Activated CD4-positive, alpha-beta T cell treated with anti-CD3 and anti-CD28 coated beads for 36 hours (primary cell): ENCODE measurements at regions of chr6 and their contacts with region 1.

Region 1: GRCh38 chr6:132341646-132342045 is 59.6 kb downstream of the MOXD1 start:
- DNase-seq: no peak
- ATAC-seq: no peak
- H3K4me3 Mint-ChIP-seq: no peak overlapping the region
- H3K27ac Mint-ChIP-seq: no peak overlapping the region
- H3K4me1 Mint-ChIP-seq: no peaks in the 10 kb centered on the region
- H3K27me3 Mint-ChIP-seq: no peaks in the 10 kb centered on the region

Region 2: GRCh38 chr6:132115714-132116366 is 225.8 kb before region 1 on chr6:
- CTCF ChIA-PET with region 1: no interaction called
- POLR2A ChIA-PET with region 1: no interaction called
- intact Hi-C with region 1: no loop called
- DNase-seq: no peak
- ATAC-seq: no peak
- H3K4me3 Mint-ChIP-seq: no peak overlapping the region
- H3K27ac Mint-ChIP-seq: no peak overlapping the region
- H3K4me1 Mint-ChIP-seq: no peaks in the 10 kb centered on the region
- H3K27me3 Mint-ChIP-seq: peaks cover 6% of the 10 kb centered on the region

Region 3: DNA sequence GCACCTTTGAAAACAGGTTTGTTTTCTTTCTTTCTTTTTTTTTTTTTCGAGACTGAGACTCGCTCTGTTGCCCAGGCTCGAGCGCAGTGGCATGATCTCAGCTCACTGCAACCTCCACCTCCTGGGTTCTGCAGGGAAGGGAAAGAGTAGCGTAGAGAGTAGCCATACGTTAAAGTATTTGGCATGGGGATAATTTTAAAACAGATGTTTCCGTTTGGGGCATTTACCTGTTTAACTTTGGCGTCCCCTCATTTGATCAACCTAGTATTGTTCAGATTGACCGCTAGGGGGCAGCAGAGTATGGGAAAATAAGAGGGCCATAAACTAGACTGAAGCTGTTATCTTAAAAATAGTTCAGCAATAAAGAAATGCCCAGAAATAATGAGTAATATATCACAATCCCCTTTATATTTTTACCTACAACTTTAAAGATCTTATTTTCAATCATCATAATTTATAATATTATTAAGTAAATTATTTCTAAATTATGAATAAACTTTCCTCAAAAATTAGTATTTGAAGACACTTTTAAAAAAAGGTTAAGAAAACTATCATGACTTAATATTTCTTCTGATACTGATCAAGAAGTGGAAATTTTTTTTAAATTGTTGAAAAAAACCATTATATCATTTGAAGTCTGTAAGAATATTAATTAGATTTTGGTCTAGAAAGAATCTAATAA is 188.8 kb after region 1 on chr6:
- CTCF ChIA-PET with region 1: no interaction called
- POLR2A ChIA-PET with region 1: no interaction called
- intact Hi-C with region 1: no loop called
- DNase-seq: peak; percentile 82
- ATAC-seq: peak; percentile 57
- H3K4me3 Mint-ChIP-seq: no peak overlapping the region
- H3K27ac Mint-ChIP-seq: no peak overlapping the region
- H3K4me1 Mint-ChIP-seq: no peaks in the 10 kb centered on the region
- H3K27me3 Mint-ChIP-seq: peaks cover 6% of the 10 kb centered on the region

Region 4: DNA sequence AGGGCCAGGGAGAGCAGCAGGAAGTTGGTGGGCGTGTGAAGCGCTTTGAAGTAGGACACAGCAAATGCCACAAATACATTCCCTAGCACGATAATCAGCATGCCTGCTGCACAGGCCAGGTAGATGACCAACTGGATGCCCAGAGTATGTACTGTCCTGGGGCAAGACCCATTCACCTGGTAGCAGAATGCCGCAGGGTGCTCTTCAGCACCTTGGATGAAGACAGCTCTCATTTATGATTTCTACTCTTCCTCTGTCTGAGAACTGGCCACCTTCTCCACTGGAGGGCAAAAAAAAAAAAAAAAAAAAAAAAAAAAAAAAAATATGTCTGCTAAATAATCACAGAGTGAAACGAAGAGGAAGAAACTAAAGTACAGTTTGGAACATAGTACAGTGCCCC is 247.8 kb after region 1 on chr6 and contains the start of gene TAAR5:
- CTCF ChIA-PET with region 1: no interaction called
- POLR2A ChIA-PET with region 1: interaction called, 10 read pairs
- intact Hi-C with region 1: no loop called
- DNase-seq: no peak
- ATAC-seq: no peak
- H3K4me3 Mint-ChIP-seq: no peak within 1 kb of the TSS
- H3K27ac Mint-ChIP-seq: no peak within 1 kb of the TSS
- H3K4me1 Mint-ChIP-seq: no peaks in the 10 kb centered on the region
- H3K27me3 Mint-ChIP-seq: peaks cover 19% of the 10 kb centered on the region
- total RNA-seq, gene TAAR5: not detected